GM12878 (cell line): ENCODE measurements at regions of chr2 and their contacts with region 1.

Region 1: DNA sequence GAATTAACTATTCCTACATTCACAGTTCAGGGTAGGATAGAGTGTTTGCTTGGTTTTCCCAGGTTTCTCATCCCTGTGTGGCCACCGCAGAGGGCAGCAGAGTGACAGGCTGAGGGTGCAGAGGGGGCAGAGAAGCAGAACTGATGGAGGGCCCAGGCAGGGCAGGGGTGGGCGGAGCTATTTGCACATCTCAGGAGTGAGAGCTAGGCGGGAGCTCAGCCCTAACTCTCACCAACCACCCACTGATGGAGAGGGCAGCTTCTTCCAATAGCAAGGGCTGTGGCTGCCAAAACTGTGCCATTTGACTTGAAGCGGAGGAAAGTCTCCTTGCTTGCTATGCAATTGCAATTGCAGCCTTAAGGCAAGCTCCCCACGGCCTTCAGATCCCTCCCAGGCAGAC is 12.0 kb upstream of the DARS1 start:
- DNase-seq: no peak
- ATAC-seq: peak; percentile 82
- H3K4me3 ChIP-seq: no peak overlapping the region
- H3K27ac ChIP-seq: no peak overlapping the region
- H3K4me1 ChIP-seq: peaks cover 11% of the 10 kb centered on the region
- H3K27me3 ChIP-seq: no peaks in the 10 kb centered on the region
- CTCF ChIP-seq: peak; percentile 5 to 27 (median 7); a peak in 3 of 6 replicates
- EP300 ChIP-seq: no peak
- POLR2A ChIP-seq: no peak
- RAD21 ChIP-seq: peak; percentile 61

Region 2: GRCh38 chr2:135913727-135914365 is 83.5 kb before region 1 on chr2:
- CTCF ChIA-PET with region 1: interaction called, 5 read pairs
- POLR2A ChIA-PET with region 1: no interaction called
- RAD21 ChIA-PET with region 1: interaction called, 14 read pairs
- SMC1A ChIA-PET with region 1: interaction called, 7 read pairs
- in situ Hi-C with region 1: no loop called
- intact Hi-C with region 1: no loop called
- DNase-seq: no peak
- ATAC-seq: peak; percentile 75
- H3K4me3 ChIP-seq: no peak overlapping the region
- H3K27ac ChIP-seq: no peak overlapping the region
- H3K4me1 ChIP-seq: no peaks in the 10 kb centered on the region
- H3K27me3 ChIP-seq: no peaks in the 10 kb centered on the region
- CTCF ChIP-seq: peak; percentile 58 to 68 (median 63); a peak in 5 of 6 replicates
- EP300 ChIP-seq: no peak
- POLR2A ChIP-seq: no peak
- RAD21 ChIP-seq: peak; percentile 75

Region 3: DNA sequence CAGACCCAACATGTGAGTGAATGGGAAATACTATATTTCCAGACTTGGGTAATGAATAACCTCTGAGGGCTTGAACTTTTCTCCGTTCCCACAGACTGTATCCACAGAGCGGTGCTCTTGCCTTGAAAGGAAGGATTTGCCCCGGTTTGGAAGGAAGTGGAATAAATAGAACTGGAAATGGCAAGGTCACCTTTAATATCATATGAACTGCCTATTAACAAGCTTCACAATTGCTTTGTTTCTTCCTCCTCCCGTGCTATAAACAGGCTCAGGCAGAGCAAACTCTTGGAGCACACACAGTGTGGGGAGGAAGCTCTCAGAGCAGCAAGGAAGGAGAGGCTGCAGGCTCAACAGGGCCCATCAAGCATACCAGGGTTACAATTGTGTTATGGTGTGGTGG is 16.6 kb after region 1 on chr2:
- CTCF ChIA-PET with region 1: interaction called, 42 read pairs
- POLR2A ChIA-PET with region 1: interaction called, 47 read pairs
- RAD21 ChIA-PET with region 1: interaction called, 19 read pairs
- SMC1A ChIA-PET with region 1: interaction called, 153 read pairs
- in situ Hi-C with region 1: no loop called
- intact Hi-C with region 1: no loop called
- DNase-seq: no peak
- ATAC-seq: no peak
- H3K4me3 ChIP-seq: no peak overlapping the region
- H3K27ac ChIP-seq: no peak overlapping the region
- H3K4me1 ChIP-seq: peaks cover 3% of the 10 kb centered on the region; the same call in 1 of the 2 replicates
- H3K27me3 ChIP-seq: no peaks in the 10 kb centered on the region
- CTCF ChIP-seq: no peak
- EP300 ChIP-seq: no peak
- POLR2A ChIP-seq: no peak
- RAD21 ChIP-seq: no peak

Region 4: GRCh38 chr2:136025057-136025973 is 27.9 kb after region 1 on chr2:
- CTCF ChIA-PET with region 1: interaction called, 7 read pairs
- POLR2A ChIA-PET with region 1: interaction called, 16 read pairs
- RAD21 ChIA-PET with region 1: interaction called, 16 read pairs
- SMC1A ChIA-PET with region 1: interaction called, 153 read pairs
- in situ Hi-C with region 1: no loop called
- intact Hi-C with region 1: no loop called
- DNase-seq: no peak
- ATAC-seq: peak; percentile 68
- H3K4me3 ChIP-seq: no peak overlapping the region
- H3K27ac ChIP-seq: no peak overlapping the region
- H3K4me1 ChIP-seq: peaks cover 7% of the 10 kb centered on the region; the same call in 1 of the 2 replicates
- H3K27me3 ChIP-seq: no peaks in the 10 kb centered on the region
- CTCF ChIP-seq: no peak
- EP300 ChIP-seq: no peak
- POLR2A ChIP-seq: no peak
- RAD21 ChIP-seq: no peak

Region 5: GRCh38 chr2:136065384-136065783 is 68.0 kb after region 1 on chr2:
- CTCF ChIA-PET with region 1: interaction called, 31 read pairs
- POLR2A ChIA-PET with region 1: no interaction called
- RAD21 ChIA-PET with region 1: interaction called, 77 read pairs
- SMC1A ChIA-PET with region 1: interaction called, 195 read pairs
- in situ Hi-C with region 1: no loop called
- intact Hi-C with region 1: no loop called
- DNase-seq: no peak
- ATAC-seq: peak; percentile 66
- H3K4me3 ChIP-seq: no peak overlapping the region
- H3K27ac ChIP-seq: no peak overlapping the region
- H3K4me1 ChIP-seq: peaks cover 12% of the 10 kb centered on the region
- H3K27me3 ChIP-seq: peaks cover 0 to 3% of the 10 kb centered on the region in 2 experiments; a peak in 1 of 4 replicates
- CTCF ChIP-seq: no peak
- EP300 ChIP-seq: no peak
- POLR2A ChIP-seq: no peak
- RAD21 ChIP-seq: no peak

Region 6: DNA sequence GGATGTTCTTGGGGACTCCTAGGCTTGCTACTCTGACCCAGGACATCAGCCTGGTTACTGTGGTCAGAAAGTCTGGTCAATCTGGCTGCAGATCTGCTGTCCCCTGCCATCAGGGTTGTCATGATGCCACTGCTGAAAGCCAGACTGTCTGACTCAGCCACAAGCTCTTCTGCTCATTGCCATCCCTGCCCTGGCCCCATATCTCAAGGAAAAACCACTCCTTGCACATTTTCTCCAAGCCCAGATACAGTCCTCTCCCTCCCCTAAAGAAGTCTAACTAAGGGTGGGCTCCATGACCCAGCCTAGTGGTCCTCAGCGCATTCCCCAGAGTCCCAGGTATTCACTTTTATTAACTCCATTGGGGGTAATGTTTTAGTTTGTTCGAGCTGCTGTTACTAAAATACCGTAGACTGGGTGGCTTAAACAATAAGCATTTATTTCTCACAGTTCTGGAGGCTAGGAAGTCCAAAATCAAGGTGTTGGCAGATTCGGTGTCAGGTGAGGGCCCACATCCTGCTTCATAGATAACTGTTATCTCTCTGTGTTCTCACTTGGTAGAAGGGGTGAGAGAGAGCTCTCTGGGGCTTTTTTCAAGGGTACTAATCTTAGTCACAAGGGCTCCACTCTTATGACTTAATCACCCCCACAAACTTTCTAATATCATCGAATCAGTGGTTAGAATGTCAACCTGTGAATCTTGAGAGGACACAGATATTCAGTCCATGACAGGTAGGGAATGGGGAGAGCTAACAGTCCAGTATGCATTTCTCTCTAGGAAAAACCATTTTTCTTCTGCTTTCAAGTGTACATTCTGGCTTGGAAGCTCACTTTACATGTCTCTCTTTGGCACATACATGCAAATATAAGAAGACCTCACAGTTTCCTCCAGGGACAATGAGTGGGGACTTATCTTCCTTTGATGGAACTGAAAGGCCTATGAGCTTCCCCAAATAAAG is 215.3 kb after region 1 on chr2:
- CTCF ChIA-PET with region 1: interaction called, 3 read pairs
- POLR2A ChIA-PET with region 1: no interaction called
- RAD21 ChIA-PET with region 1: interaction called, 21 read pairs
- SMC1A ChIA-PET with region 1: interaction called, 14 read pairs
- in situ Hi-C with region 1: no loop called
- intact Hi-C with region 1: no loop called
- DNase-seq: peak; percentile 34
- ATAC-seq: peak; percentile 83
- H3K4me3 ChIP-seq: no peak overlapping the region
- H3K27ac ChIP-seq: no peak overlapping the region
- H3K4me1 ChIP-seq: peaks cover 4% of the 10 kb centered on the region
- H3K27me3 ChIP-seq: peaks cover 0 to 8% of the 10 kb centered on the region in 2 experiments; a peak in 2 of 4 replicates
- CTCF ChIP-seq: no peak
- EP300 ChIP-seq: peak in 1 of 2 experiments; percentile 78; a peak in 3 of 4 replicates
- POLR2A ChIP-seq: no peak
- RAD21 ChIP-seq: no peak